ENCODE measurements at regions of chr21 and their contacts with region 1.

Region 1: GRCh38 chr21:43728467-43729390 is 9.8 kb downstream of the PDXK start:
- DNase-seq: peak; percentile 98 to 99 (median 98)
- H3K4me3 ChIP-seq: peak overlapping the region; percentile 48
- H3K27ac ChIP-seq: peak overlapping the region; percentile 75 to 90
- H3K4me1 ChIP-seq: peaks cover 22% of the 10 kb centered on the region
- H3K27me3 ChIP-seq: no peaks in the 10 kb centered on the region
- CTCF ChIP-seq: peak in 2 of 3 donors; percentile 27 to 31
- EP300 ChIP-seq: peak; percentile 5
- POLR2A ChIP-seq: peak; percentile 69

Region 2: DNA sequence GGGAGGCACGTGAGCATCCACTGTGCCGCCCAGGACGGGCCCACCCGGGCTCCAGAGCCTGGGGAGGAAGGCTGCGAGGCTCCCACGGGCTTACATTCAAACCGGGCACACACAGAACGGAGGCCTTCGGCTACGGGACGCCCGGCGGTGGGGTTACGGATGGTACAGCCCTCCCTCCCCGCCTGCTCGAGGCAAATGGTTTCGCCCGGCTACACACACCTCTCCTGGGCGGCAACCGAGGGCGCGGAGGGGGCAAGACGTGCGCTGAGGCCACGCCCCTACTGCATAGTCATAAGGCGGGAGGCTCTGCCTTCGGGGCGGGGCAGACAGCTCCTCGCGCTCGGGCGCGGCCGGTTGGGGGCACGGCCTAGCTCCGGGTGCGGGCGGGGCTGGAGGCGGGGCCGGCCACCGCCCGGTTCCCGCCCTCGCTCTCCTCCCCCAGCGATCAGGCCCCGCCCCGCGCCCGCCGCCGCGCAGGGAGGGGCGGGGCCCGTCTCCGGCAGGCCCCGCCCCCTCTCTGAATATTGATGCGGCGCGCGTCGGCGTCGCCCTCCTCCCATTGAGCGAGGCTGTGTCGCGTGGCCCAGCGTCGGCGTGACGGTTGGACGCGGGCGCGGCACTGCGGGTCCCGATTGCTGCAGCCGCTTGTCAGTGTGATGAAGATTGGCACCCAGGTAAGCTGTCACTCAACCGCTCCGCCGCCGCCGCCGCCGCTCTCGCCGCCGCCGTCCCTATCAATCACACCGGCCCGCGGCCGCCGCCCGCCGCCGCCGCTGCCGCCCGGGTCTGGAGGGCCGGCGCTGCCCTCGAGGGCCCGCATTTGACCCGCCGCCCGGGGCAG is 754.5 kb before region 1 on chr21 and contains the start of gene PKNOX1:
- intact Hi-C with region 1: loop called in 1 of 4 experiments (anchors 5 kb)
- DNase-seq: peak; percentile 98 to 99 (median 98)
- H3K4me3 ChIP-seq: peak within 1 kb of the TSS; percentile 79
- H3K27ac ChIP-seq: peak within 1 kb of the TSS; percentile 99
- H3K4me1 ChIP-seq: no peaks in the 10 kb centered on the region
- H3K27me3 ChIP-seq: no peaks in the 10 kb centered on the region
- CTCF ChIP-seq: no peak
- EP300 ChIP-seq: peak; percentile 47
- POLR2A ChIP-seq: peak; percentile 59
- total RNA-seq, gene PKNOX1: 7.0 to 50.9 (median 31.0) TPM

Region 3: GRCh38 chr21:43667191-43667904 is 61.4 kb before region 1 on chr21:
- intact Hi-C with region 1: loop called in 1 of 4 experiments (anchors 10 kb)
- DNase-seq: no peak
- H3K4me3 ChIP-seq: no peak overlapping the region
- H3K27ac ChIP-seq: no peak overlapping the region
- H3K4me1 ChIP-seq: no peaks in the 10 kb centered on the region
- H3K27me3 ChIP-seq: no peaks in the 10 kb centered on the region
- CTCF ChIP-seq: no peak
- EP300 ChIP-seq: no peak
- POLR2A ChIP-seq: no peak

Region 4: DNA sequence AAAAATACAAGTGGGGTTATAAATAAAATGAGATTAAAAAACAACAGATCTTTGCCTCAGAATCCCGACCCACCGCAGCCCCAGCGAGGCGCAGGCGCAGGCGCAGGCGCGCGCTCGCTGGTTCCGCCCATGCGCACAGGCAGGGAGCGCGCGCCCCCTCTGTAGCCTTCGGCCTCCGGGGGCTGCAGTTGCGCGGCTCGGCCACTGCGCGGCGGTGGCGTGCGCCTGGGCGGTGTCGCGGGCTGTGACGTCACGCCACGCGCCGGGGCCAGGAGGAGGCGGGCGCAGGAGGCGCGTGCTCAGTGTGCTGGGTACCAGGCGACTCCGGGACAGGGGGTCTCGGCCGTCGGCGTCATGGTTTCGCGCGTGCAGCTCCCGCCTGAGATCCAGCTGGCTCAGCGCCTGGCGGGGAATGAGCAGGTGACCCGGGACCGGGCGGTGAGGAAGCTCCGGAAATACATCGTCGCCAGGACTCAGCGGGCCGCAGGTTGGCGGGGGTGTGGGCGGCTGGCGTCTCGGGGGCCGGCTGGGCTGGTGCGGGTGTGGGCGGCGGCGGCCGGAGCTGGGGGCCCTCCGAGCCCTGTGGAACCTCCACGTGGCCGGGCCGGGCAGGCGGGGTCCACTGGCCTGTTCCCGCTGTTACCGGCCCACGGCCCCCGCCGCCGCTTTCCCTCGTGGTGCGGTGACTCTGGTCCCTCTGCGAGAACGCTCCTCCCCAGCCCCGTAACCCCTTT is 60.7 kb after region 1 on chr21 and contains the start of gene RRP1:
- intact Hi-C with region 1: loop called in 1 of 4 experiments (anchors 10 kb)
- DNase-seq: peak; percentile 89 to 97 (median 94)
- H3K4me3 ChIP-seq: peak within 1 kb of the TSS; percentile 94
- H3K27ac ChIP-seq: peak within 1 kb of the TSS; percentile 9 to 61
- H3K4me1 ChIP-seq: peaks cover 5% of the 10 kb centered on the region
- H3K27me3 ChIP-seq: no peaks in the 10 kb centered on the region
- CTCF ChIP-seq: peak; percentile 100
- EP300 ChIP-seq: no peak
- POLR2A ChIP-seq: peak; percentile 73
- total RNA-seq, gene RRP1: 8.5 to 29.3 (median 25.2) TPM

Measured in ovary (tissue), 10 donors.